Activated T-helper 1 cell treated with anti-CD3 and anti-CD28 coated beads, Interleukin-12 subunit alpha, Interleukin-12 subunit beta, Interleukin-2, Interleukin-4 antibody, amounts not matched to agents 30 ng/mL and 10 ng/mL and 1 ng/mL, durations not matched to agents 14 hours and 24 hours and 36 hours (primary cell): ENCODE measurements at regions of chr17 and their contacts with region 1.

Region 1: GRCh38 chr17:66426397-66427033 is 124.1 kb downstream of the PRKCA start:
- DNase-seq: peak; percentile 48
- H3K4me3 Mint-ChIP-seq: peak overlapping the region; percentile 23
- H3K27ac Mint-ChIP-seq: peak overlapping the region; percentile 66
- H3K4me1 Mint-ChIP-seq: peaks cover 65% of the 10 kb centered on the region
- H3K27me3 Mint-ChIP-seq: no peaks in the 10 kb centered on the region

Region 2: DNA sequence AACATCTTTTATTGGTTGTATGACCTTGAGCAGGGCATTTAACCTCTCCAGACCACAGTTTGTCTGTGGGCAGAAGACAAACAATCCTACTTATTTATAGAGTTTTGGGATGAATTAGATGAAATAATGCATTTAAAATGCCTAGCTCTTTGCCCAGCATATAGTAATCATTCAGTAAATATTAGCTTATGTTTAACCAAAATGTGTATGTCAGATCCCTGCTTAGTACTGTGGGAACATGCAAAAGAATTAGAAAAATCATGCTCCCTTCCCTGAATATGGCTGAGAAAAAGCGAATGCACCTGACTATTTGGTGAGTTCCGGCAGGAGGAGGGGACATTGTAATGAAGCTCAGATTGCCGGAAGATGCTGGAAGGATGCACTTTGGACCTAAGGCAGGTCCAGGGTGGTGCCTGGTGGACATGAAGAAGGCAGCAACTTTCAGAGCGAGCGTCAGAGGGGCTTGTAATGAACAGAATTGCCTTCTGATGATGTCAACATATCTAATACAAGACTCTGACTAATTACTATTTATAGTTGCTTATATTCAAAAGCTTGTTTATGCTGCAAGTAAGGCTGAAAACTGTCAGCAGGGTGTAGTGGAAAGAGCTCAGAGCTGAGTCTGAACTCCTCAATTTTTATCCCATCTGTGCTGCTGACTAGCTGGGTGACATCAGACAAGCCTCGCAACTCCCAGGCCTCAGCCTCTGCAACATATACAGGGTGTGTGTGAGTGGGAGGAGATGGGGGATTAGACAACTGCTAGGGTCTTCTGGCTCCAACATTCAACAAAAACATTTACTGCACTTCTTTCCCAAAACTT is 97.1 kb after region 1 on chr17:
- intact Hi-C with region 1: no loop called
- DNase-seq: no peak
- H3K4me3 Mint-ChIP-seq: no peak overlapping the region
- H3K27ac Mint-ChIP-seq: peak overlapping the region; percentile 47
- H3K4me1 Mint-ChIP-seq: peaks cover 81% of the 10 kb centered on the region
- H3K27me3 Mint-ChIP-seq: no peaks in the 10 kb centered on the region

Region 3: DNA sequence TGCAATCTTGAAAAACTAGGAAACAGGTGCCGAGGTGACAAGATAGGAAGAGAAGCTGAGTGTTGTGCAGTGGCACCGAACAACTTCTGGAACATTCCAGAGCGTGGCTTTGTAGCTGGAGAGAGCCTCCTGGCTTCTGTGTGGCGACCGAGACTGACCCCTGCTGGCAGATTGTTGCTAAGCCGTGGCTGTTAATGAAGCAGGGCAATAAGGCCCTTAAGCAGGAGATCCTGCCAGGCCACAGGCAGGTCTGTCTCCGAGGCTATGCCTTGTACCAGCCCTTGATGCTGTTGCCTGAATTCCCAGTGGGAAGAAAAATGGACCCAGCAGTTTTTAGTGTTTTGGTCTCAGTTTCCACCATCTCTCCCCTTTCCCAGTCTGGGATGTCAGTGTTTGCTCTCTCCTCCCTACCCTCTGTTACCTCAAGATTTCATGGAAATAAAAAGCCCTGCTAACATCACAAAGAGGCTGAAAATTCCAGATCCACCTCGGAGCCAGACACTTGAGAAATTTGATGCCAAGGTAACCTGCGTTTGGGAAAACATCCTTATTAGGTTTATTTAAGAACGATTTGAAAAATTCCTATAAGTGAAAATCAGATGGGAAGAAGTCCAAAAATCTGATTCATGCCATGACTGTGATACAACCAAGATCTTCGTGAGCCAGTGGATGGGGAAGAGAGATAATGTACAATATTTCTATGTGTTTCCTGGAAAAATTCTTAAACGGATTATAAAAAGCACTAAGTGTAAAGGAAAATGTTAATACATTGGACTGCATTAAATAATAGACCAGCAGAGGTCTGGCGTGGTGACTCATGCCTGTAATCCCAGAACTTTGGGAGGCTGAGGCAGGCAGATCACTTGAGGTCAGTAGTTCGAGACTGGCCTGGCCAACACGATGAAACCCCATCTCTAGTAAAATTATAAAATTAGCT is 141.0 kb after region 1 on chr17:
- intact Hi-C with region 1: loop called (anchors 2 kb)
- DNase-seq: peak; percentile 63
- H3K4me3 Mint-ChIP-seq: no peak overlapping the region
- H3K27ac Mint-ChIP-seq: peak overlapping the region; percentile 25
- H3K4me1 Mint-ChIP-seq: peaks cover 37% of the 10 kb centered on the region
- H3K27me3 Mint-ChIP-seq: no peaks in the 10 kb centered on the region

Region 4: DNA sequence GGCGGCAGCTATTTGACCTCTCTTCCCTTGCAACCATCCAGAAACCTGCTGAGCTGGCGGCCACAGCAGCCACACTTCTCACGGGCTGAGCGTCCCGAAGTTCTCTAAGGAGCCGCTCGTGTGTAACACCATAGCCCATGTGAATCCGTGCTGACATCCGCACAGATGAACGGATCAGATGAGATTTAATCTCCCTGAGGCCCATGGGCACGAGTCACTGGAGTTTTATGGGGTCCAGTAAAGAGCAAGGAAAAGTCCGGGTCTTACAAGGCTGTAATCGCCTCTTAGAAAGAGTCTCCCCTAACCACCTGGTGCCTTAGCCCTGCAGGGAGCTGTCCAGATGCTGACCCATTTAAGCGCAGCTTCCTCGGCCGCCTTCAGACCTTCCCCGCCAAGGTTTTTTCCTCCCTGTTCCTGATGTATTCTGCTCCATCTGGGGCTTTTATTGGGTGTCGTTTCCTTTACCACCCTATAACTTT is 402.9 kb after region 1 on chr17:
- intact Hi-C with region 1: no loop called
- DNase-seq: peak; percentile 6
- H3K4me3 Mint-ChIP-seq: no peak overlapping the region
- H3K27ac Mint-ChIP-seq: no peak overlapping the region
- H3K4me1 Mint-ChIP-seq: peaks cover 9% of the 10 kb centered on the region
- H3K27me3 Mint-ChIP-seq: peaks cover 41% of the 10 kb centered on the region